ENCODE measurements at regions of chr14 and their contacts with region 1.

Region 1: GRCh38 chr14:88013750-88014349 is 8.9 kb downstream of the GPR65 start:
- DNase-seq: peak; percentile 44
- H3K4me3 ChIP-seq: no peak overlapping the region
- H3K27ac ChIP-seq: no peak overlapping the region
- H3K4me1 ChIP-seq: no peaks in the 10 kb centered on the region
- H3K27me3 ChIP-seq: no peaks in the 10 kb centered on the region
- CTCF ChIP-seq: peak; percentile 85 to 88

Region 2: DNA sequence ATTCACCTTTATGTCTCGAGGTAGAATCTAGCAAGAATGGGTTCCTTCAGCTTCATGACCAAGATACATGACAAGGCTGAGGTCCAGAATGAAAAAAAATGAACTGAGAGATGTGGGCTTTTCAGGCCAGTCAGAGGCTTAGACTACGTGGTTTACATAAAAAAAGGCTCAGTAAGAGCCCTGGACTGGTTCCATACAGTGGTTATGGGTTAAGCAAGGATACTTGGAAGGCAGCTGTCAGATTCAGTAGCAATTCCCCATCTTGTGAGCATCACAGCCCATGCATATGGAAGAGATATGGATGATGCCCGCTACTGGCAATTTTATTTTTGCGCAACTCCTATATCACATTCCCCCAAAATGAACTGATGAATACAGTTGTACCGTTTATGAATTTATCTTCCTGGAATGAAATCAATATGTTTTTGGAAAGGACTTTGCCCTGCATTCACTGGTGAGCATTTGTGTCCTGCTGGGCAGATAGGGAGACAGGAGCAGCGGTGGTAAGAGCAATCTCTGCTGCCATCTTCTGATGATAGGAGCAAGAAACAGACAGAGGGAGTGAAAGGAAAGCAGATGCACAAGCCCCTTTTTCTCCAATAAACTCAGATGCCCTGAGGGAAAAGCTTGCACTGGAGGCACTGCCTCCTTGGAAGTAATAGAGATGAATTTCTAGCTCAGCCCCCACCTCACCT is 301.3 kb before region 1 on chr14:
- CTCF ChIA-PET with region 1: no interaction called
- dilution Hi-C with region 1: no loop called
- in situ Hi-C with region 1: no loop called
- intact Hi-C with region 1: no loop called
- DNase-seq: no peak
- H3K4me3 ChIP-seq: no peak overlapping the region
- H3K27ac ChIP-seq: no peak overlapping the region
- H3K4me1 ChIP-seq: no peaks in the 10 kb centered on the region
- H3K27me3 ChIP-seq: no peaks in the 10 kb centered on the region
- CTCF ChIP-seq: peak in 1 of 2 donors; percentile 5

Region 3: GRCh38 chr14:87944987-87945604 is 68.8 kb before region 1 on chr14:
- CTCF ChIA-PET with region 1: no interaction called
- dilution Hi-C with region 1: no loop called
- in situ Hi-C with region 1: no loop called
- intact Hi-C with region 1: loop called (anchors 2 kb)
- DNase-seq: peak; percentile 23
- H3K4me3 ChIP-seq: no peak overlapping the region
- H3K27ac ChIP-seq: no peak overlapping the region
- H3K4me1 ChIP-seq: no peaks in the 10 kb centered on the region
- H3K27me3 ChIP-seq: no peaks in the 10 kb centered on the region
- CTCF ChIP-seq: peak; percentile 44 to 54

Region 4: GRCh38 chr14:87960013-87960787 is 53.6 kb before region 1 on chr14:
- CTCF ChIA-PET with region 1: no interaction called
- dilution Hi-C with region 1: no loop called
- in situ Hi-C with region 1: no loop called
- intact Hi-C with region 1: no loop called
- DNase-seq: no peak
- H3K4me3 ChIP-seq: no peak overlapping the region
- H3K27ac ChIP-seq: no peak overlapping the region
- H3K4me1 ChIP-seq: no peaks in the 10 kb centered on the region
- H3K27me3 ChIP-seq: no peaks in the 10 kb centered on the region
- CTCF ChIP-seq: no peak

Region 5: GRCh38 chr14:88168498-88169165 is 154.8 kb after region 1 on chr14:
- CTCF ChIA-PET with region 1: no interaction called
- dilution Hi-C with region 1: no loop called
- in situ Hi-C with region 1: no loop called
- intact Hi-C with region 1: loop called (anchors 1 kb)
- DNase-seq: peak; percentile 17
- H3K4me3 ChIP-seq: no peak overlapping the region
- H3K27ac ChIP-seq: no peak overlapping the region
- H3K4me1 ChIP-seq: no peaks in the 10 kb centered on the region
- H3K27me3 ChIP-seq: no peaks in the 10 kb centered on the region
- CTCF ChIP-seq: peak; percentile 75 to 92

Region 6: GRCh38 chr14:88380405-88380804 is 366.6 kb after region 1 on chr14:
- CTCF ChIA-PET with region 1: no interaction called
- dilution Hi-C with region 1: no loop called
- in situ Hi-C with region 1: no loop called
- intact Hi-C with region 1: loop called (anchors 5 kb)
- DNase-seq: no peak
- H3K4me3 ChIP-seq: no peak overlapping the region
- H3K27ac ChIP-seq: no peak overlapping the region
- H3K4me1 ChIP-seq: peaks cover 5% of the 10 kb centered on the region
- H3K27me3 ChIP-seq: peaks cover 4% of the 10 kb centered on the region
- CTCF ChIP-seq: peak in 1 of 2 donors; percentile 29

Measured in mammary epithelial cell (primary cell).